ENCODE measurements at regions of chr17 and their contacts with region 1.

Region 1: DNA sequence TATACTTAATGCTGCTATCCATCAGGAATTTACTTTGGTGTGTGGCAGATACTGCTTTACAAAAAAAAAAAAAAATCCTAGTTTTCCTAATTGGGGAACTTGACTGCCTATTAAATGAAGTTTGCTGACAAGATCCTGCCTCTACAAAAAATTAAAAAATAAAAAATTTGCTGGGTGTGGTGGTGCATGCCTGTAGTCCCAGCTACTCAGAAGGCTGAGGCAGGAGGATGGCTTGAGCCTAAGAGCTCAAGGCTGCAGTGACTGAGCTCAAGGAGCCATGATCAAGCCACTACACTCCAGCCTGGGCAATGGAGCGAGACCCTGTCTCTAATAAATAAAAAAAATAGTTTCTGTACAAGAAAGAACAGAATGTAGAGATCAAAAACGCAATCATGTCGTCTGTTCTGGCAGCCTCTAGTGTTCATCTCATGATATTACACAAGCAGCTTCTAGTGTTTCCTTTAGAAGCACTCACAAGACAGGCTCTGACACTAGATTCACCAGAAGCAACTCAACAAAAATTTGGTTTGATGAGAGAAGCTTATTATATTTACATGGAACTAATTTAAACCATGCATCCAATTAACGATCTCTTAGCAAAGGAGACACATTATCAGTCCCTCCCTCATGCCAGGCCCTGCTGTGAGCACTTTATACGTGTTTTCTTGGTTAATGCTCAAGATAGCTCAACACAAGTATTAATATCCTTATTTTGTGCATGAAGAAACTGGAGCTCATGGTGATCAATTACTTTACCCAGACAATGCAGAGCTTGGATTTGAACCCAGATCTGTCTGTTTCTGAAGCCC is 6.8 kb upstream of the KRTAP17-1 start:
- DNase-seq: no peak
- ATAC-seq: no peak

Region 2: DNA sequence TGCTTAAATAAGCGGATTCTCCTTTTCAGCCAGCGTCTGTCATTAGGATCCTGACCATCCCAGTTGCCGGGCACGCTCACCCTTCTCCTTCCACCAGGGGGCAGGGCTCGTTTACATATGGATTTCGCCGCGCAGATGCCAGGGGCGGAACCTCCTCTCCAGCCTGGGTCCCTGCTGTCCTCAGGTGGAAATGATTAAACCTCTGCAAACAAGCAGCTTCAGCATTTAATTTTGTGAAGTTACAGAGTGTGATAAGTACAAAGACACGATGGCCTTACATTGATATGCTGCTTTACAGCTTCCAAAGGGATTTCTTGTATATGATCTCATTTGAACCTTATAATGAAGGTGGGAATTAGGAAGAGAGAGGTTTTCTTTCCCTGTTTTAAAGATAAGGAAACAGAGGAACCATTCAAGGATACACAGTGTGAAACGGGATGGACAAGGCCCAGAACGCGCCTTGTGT is 518.6 kb before region 1 on chr17:
- intact Hi-C with region 1: loop called (anchors 5 kb)
- DNase-seq: peak; percentile 87
- ATAC-seq: peak; percentile 81

Region 3: GRCh38 chr17:40915199-40915661 is 407.1 kb before region 1 on chr17:
- intact Hi-C with region 1: loop called (anchors 10 kb)
- DNase-seq: no peak
- ATAC-seq: no peak

Region 4: GRCh38 chr17:41178843-41179616 is 143.3 kb before region 1 on chr17:
- intact Hi-C with region 1: no loop called
- DNase-seq: no peak
- ATAC-seq: no peak

Region 5: GRCh38 chr17:41254861-41255260 is 67.4 kb before region 1 on chr17:
- intact Hi-C with region 1: no loop called
- DNase-seq: no peak
- ATAC-seq: no peak

Region 6: GRCh38 chr17:41338961-41339485 is 16.7 kb after region 1 on chr17:
- intact Hi-C with region 1: no loop called
- DNase-seq: no peak
- ATAC-seq: no peak

Measured in Right ventricle myocardium inferior (tissue), 1 donor.